ENCODE measurements at regions of chr2 and their contacts with region 1.

Region 1: GRCh38 chr2:174888646-174889271 is 116.4 kb downstream of the CHN1 start:
- DNase-seq: no peak
- H3K4me3 Mint-ChIP-seq: no peak overlapping the region
- H3K27ac Mint-ChIP-seq: no peak overlapping the region
- H3K4me1 Mint-ChIP-seq: no peaks in the 10 kb centered on the region
- H3K27me3 Mint-ChIP-seq: peaks cover 5% of the 10 kb centered on the region

Region 2: DNA sequence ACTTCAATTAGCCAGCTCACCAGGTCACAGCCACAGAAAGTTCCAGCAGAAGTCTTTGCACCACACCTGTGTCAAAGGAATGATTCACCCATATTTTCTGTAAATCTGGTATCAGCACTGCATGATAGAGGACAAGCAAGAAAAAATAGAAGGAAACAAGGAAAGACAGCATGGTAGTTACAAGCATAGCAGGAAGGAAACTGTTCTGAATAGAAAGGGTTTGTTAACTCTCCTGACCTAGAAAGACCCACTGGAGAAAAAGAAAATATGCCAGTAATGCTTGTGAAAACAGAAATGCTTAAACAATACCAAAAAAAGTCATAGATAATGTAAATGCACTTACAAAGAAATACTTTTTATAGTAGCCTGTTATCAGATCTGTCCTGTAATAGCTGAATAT is 452.4 kb before region 1 on chr2:
- CTCF ChIA-PET with region 1: no interaction called
- DNase-seq: no peak
- H3K4me3 Mint-ChIP-seq: no peak overlapping the region
- H3K27ac Mint-ChIP-seq: no peak overlapping the region
- H3K4me1 Mint-ChIP-seq: no peaks in the 10 kb centered on the region
- H3K27me3 Mint-ChIP-seq: no peaks in the 10 kb centered on the region

Region 3: DNA sequence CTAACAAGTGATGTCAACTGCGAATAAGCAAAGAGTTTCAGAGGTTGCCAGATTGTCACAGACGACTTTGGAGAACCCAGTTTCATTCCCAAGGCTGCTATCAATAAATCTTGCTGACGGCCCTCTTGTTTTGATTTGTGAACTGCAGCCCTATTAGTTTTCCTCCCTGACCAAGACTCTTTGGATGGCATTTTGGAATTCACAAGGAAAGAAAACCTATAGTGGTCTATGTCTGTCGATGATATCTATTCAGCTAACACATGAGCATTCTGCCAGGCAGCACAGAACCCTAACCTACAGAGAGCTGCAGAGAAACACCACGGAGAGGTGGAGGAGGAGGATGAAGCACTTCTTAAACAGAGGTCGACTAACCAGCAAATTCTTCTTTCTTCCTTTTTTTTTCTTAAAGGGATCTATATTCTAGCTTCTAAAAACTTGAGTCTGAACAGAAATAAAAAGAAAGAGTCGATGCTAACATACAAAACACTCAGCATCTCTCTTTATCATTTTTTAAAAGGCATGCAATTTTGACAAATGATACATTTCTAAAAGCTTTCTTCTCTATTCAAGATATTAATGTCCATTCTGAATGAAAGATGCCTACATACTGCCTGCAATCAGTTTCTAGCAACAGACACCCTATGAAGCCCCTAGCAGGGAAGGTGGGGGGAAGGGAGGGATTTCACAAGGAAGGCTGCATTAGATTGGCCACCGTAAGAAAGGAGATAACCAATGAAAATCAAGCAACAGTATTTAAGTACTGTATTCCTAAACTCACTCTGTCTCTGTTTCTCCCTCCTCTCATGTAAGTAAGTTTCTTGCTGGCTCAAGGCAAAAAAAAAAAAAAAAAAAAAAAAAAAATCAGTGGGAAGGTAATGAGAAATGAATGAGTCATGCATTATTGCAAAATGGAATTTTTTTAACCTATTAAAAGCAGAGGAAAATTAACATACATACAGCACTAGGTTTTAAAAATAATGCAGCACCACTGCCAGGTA is 41.5 kb before region 1 on chr2:
- CTCF ChIA-PET with region 1: no interaction called
- DNase-seq: no peak
- H3K4me3 Mint-ChIP-seq: no peak overlapping the region
- H3K27ac Mint-ChIP-seq: no peak overlapping the region
- H3K4me1 Mint-ChIP-seq: no peaks in the 10 kb centered on the region
- H3K27me3 Mint-ChIP-seq: peaks cover 3% of the 10 kb centered on the region

Region 4: GRCh38 chr2:174868878-174869277 is 19.9 kb before region 1 on chr2:
- CTCF ChIA-PET with region 1: no interaction called
- DNase-seq: no peak
- H3K4me3 Mint-ChIP-seq: no peak overlapping the region
- H3K27ac Mint-ChIP-seq: no peak overlapping the region
- H3K4me1 Mint-ChIP-seq: no peaks in the 10 kb centered on the region
- H3K27me3 Mint-ChIP-seq: peaks cover 4% of the 10 kb centered on the region

Region 5: GRCh38 chr2:174901075-174901474 is 12.3 kb after region 1 on chr2:
- CTCF ChIA-PET with region 1: interaction called, 11 read pairs
- DNase-seq: peak; percentile 34
- H3K4me3 Mint-ChIP-seq: peak overlapping the region; percentile 37
- H3K27ac Mint-ChIP-seq: peak overlapping the region; percentile 82
- H3K4me1 Mint-ChIP-seq: peaks cover 22% of the 10 kb centered on the region
- H3K27me3 Mint-ChIP-seq: no peaks in the 10 kb centered on the region

Region 6: DNA sequence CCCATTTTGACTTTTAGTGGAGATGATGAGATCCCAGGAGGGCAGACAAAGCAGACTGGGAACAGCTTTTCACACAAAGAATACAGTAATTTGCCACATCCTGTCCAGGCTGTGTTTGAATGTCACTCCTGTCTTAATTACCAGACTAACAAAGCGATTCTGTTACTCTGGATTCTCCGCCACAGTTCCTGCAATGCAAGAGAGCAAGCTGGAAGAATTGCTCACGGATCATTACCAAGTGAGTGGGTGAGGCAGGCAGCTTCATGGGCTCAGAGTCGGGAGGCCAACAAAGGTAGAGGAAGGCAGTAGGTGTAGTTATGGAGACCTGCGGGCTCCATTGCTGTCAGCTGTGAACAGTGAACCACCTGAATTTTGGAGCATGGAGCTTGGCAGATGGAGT is 543.3 kb after region 1 on chr2:
- CTCF ChIA-PET with region 1: no interaction called
- DNase-seq: no peak
- H3K4me3 Mint-ChIP-seq: no peak overlapping the region
- H3K27ac Mint-ChIP-seq: no peak overlapping the region
- H3K4me1 Mint-ChIP-seq: no peaks in the 10 kb centered on the region
- H3K27me3 Mint-ChIP-seq: no peaks in the 10 kb centered on the region

Measured in activated naive CD4-positive, alpha-beta T cell treated with anti-CD3 and anti-CD28 coated beads, Interleukin-2, amount 10 ng/mL, durations not matched to agents 7 days and 5 days (primary cell).